Heart left ventricle (tissue), 16 donors: ENCODE measurements at regions of chr5 and their contacts with region 1.

Region 1: GRCh38 chr5:56588636-56589480 is 226.5 kb upstream of the MAP3K1 start:
- DNase-seq: peak; percentile 61 to 86 (median 72)
- ATAC-seq: peak; percentile 23 to 71 (median 64)
- H3K4me3 ChIP-seq: no peak overlapping the region
- H3K27ac ChIP-seq: peak overlapping the region; percentile 1 to 84 (median 61)
- H3K4me1 ChIP-seq: peaks cover 4 to 52% (median 39%) of the 10 kb centered on the region in 12 donors
- H3K27me3 ChIP-seq: no peaks in the 10 kb centered on the region
- CTCF ChIP-seq: no peak
- POLR2A ChIP-seq: no peak

Region 2: DNA sequence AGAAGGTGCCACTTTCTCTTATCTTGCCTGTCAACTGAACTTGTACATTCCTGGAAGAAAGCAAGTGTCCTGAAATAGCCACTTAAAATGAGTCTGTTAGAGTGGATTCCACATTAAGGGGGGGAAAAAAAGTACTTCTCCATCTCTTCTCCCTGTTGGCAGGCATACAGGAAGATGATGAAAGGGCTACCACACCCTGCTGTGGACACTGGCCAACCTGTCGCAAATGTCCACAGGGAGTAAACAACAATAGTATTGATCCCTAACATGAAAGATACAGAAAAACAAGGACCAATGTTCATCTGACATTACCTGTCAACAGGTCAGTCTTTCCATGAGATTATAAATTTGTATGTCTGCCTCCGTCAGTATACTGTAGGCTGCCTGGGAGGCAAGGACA is 38.6 kb before region 1 on chr5:
- intact Hi-C with region 1: loop called in 1 of 10 experiments (anchors 2 kb)
- DNase-seq: no peak
- ATAC-seq: no peak
- H3K4me3 ChIP-seq: no peak overlapping the region
- H3K27ac ChIP-seq: no peak overlapping the region
- H3K4me1 ChIP-seq: peaks cover 0 to 18% (median 10%) of the 10 kb centered on the region in 12 donors
- H3K27me3 ChIP-seq: no peaks in the 10 kb centered on the region
- CTCF ChIP-seq: no peak
- POLR2A ChIP-seq: no peak